ENCODE measurements at regions of chr7 and their contacts with region 1.

Region 1: DNA sequence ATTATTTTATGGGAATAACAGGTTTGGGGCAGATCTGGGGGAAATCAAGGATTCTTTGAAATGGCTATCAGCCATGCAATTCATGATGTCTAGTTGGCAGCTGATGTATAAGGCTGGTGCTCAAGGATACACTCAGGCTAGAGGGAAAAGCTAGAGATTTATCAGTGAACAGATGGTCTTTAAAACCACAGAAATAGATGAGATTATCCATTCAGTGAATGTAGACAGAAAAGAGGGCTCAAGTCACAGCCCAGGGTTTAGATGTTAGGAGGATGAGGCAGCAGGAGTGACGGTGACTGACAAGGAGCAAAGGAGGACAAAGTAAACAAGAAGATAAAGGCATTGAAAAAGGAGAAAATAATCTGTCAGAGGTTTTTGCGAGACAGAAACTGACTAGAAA is 238.7 kb downstream of the CDK14 start:
- DNase-seq: no peak
- ATAC-seq: no peak
- H3K4me3 ChIP-seq: no peak overlapping the region
- H3K27ac ChIP-seq: no peak overlapping the region
- H3K4me1 ChIP-seq: no peaks in the 10 kb centered on the region
- H3K27me3 ChIP-seq: no peaks in the 10 kb centered on the region
- CTCF ChIP-seq: no peak

Region 2: DNA sequence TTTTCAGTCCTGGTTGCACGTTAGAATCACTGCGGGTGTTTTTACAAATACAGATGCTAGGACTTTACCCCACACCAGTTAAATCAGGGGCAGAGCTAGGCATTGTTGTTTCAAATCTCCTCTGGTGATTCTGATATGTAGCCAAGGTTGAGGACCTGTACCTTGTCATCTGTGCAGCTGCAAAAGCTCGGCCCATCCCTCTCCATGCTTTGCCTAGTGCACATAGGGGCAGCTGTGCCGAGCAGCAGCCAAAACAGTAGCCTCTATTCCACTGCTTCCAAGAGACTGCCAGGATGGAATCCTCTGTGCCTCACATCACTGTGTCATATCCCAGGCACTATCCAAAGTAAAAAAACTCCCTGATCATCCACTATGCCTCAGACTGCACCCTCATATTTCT is 57.3 kb before region 1 on chr7:
- intact Hi-C with region 1: loop called in 1 of 2 experiments (anchors 5 kb)
- DNase-seq: no peak
- ATAC-seq: no peak
- H3K4me3 ChIP-seq: no peak overlapping the region
- H3K27ac ChIP-seq: no peak overlapping the region
- H3K4me1 ChIP-seq: no peaks in the 10 kb centered on the region
- H3K27me3 ChIP-seq: no peaks in the 10 kb centered on the region
- CTCF ChIP-seq: no peak